ENCODE measurements at regions of chr5 and their contacts with region 1.

Region 1: GRCh38 chr5:148730943-148731861 is 76.9 kb upstream of the HTR4 start:
- DNase-seq: peak; percentile 82
- H3K4me3 Mint-ChIP-seq: peak overlapping the region; percentile 47
- H3K27ac Mint-ChIP-seq: peak overlapping the region; percentile 4
- H3K4me1 Mint-ChIP-seq: peaks cover 46% of the 10 kb centered on the region
- H3K27me3 Mint-ChIP-seq: no peaks in the 10 kb centered on the region
- CTCF ChIP-seq: peak; percentile 91

Region 2: GRCh38 chr5:148179234-148179824 is 551.9 kb before region 1 on chr5:
- CTCF ChIA-PET with region 1: interaction called, 5 read pairs
- intact Hi-C with region 1: loop called (anchors 1 kb)
- DNase-seq: peak; percentile 18
- H3K4me3 Mint-ChIP-seq: no peak overlapping the region
- H3K27ac Mint-ChIP-seq: no peak overlapping the region
- H3K4me1 Mint-ChIP-seq: no peaks in the 10 kb centered on the region
- H3K27me3 Mint-ChIP-seq: no peaks in the 10 kb centered on the region
- CTCF ChIP-seq: peak; percentile 18

Region 3: DNA sequence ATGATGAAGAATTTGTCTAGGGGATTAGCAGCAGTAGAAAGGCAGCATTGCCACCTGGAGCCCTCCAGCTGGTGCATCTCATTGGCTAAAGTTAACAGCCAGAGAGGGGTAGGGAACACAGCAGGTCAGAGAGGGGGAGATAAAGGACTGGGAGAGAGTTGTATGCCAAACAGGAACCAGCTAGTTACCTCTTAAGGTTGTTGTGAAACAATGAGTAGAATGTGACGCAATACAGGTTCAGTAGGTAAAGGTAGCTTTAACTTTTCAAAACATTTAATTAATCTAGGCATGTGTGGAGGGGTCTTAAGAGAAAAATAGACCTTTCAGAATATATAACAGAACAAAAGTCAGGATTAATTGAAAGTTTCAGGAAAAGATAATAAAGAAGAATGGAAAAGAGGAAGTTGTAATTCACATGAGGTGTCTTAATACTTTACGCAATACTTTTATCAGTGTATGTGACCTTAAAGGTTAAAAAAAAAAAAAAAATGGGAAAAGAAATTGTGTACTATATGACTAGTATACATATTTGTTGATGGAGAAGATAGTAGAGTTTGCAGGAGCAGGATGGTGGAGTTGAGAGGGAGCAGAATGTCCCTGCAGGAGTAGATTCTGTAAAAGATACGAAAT is 333.1 kb before region 1 on chr5:
- CTCF ChIA-PET with region 1: interaction called, 15 read pairs
- intact Hi-C with region 1: no loop called
- DNase-seq: peak; percentile 19
- H3K4me3 Mint-ChIP-seq: peak overlapping the region; percentile 6
- H3K27ac Mint-ChIP-seq: peak overlapping the region; percentile 60
- H3K4me1 Mint-ChIP-seq: peaks cover 55% of the 10 kb centered on the region
- H3K27me3 Mint-ChIP-seq: no peaks in the 10 kb centered on the region
- CTCF ChIP-seq: no peak

Region 4: GRCh38 chr5:148469501-148469935 is 261.7 kb before region 1 on chr5:
- CTCF ChIA-PET with region 1: interaction called, 11 read pairs
- intact Hi-C with region 1: no loop called
- DNase-seq: no peak
- H3K4me3 Mint-ChIP-seq: no peak overlapping the region
- H3K27ac Mint-ChIP-seq: no peak overlapping the region
- H3K4me1 Mint-ChIP-seq: no peaks in the 10 kb centered on the region
- H3K27me3 Mint-ChIP-seq: no peaks in the 10 kb centered on the region
- CTCF ChIP-seq: no peak

Region 5: GRCh38 chr5:148615644-148616275 is 115.4 kb before region 1 on chr5:
- CTCF ChIA-PET with region 1: no interaction called
- intact Hi-C with region 1: no loop called
- DNase-seq: no peak
- H3K4me3 Mint-ChIP-seq: no peak overlapping the region
- H3K27ac Mint-ChIP-seq: no peak overlapping the region
- H3K4me1 Mint-ChIP-seq: no peaks in the 10 kb centered on the region
- H3K27me3 Mint-ChIP-seq: peaks cover 13% of the 10 kb centered on the region
- CTCF ChIP-seq: no peak

Region 6: DNA sequence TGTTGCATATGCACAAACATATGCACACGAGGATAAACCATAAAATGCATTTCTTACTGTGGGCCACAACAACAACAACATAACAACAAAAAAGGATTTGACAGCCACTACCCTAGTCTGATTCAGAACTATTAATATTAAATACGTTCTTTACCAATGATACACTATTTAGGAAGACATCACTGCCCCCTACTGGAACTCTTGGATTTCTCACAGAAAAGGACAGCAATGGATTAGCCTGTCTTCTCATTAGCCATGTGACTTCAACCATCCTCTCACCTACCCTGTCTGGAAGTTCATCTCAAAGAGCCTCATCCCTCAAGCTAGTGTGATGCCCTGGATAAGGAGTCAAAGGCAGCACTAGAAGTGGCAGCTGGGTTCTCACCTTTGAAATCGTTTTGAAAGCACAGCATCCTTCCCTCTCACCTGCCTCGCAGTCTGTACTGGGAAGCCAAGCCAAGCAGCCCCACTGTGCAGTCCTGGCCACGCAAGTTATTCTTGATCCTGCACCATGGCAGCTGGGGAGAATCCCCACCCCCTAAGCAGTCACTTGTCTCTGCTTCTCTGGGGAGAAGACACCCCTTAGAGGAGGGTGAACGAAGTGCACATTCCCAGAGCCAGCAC is 267.1 kb after region 1 on chr5:
- CTCF ChIA-PET with region 1: interaction called, 14 read pairs
- intact Hi-C with region 1: loop called (anchors 1 kb)
- DNase-seq: peak; percentile 76
- H3K4me3 Mint-ChIP-seq: no peak overlapping the region
- H3K27ac Mint-ChIP-seq: peak overlapping the region; percentile 25
- H3K4me1 Mint-ChIP-seq: peaks cover 76% of the 10 kb centered on the region
- H3K27me3 Mint-ChIP-seq: no peaks in the 10 kb centered on the region
- CTCF ChIP-seq: peak; percentile 56

Region 7: DNA sequence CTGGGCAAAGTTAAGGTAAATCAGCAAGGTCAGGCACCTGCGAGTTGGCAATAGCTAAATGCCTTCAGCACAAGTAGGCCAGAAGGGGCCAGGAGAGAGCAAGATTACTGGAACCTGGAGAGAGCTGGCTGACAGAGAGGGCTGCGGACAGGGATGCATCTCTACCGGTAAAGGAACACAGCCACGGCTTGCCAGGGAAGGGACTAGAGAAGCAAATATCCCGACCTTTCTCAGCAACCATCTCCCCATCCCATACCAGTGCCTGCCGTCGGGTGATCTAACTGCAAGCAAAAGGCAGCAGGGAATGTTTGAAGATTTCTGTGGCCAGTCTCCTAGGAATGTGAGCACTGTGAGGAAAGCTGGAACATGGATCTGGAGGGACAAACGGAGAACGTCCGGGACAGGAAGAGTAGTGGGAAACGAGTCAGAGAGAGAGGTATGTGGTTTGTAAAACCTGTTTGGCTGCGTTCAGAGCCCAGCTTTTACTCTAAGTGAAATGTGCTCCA is 394.2 kb after region 1 on chr5:
- CTCF ChIA-PET with region 1: interaction called, 11 read pairs
- intact Hi-C with region 1: no loop called
- DNase-seq: peak; percentile 76
- H3K4me3 Mint-ChIP-seq: peak overlapping the region; percentile 62
- H3K27ac Mint-ChIP-seq: peak overlapping the region; percentile 74
- H3K4me1 Mint-ChIP-seq: peaks cover 65% of the 10 kb centered on the region
- H3K27me3 Mint-ChIP-seq: no peaks in the 10 kb centered on the region
- CTCF ChIP-seq: peak; percentile 49